ENCODE measurements at regions of chr3 and their contacts with region 1.

Region 1: GRCh38 chr3:63993653-63994079 is 29.6 kb downstream of the PSMD6 start:
- DNase-seq: peak; percentile 63 to 68
- H3K4me3 ChIP-seq: no peak overlapping the region
- H3K4me3 Mint-ChIP-seq: no peak overlapping the region
- H3K27ac Mint-ChIP-seq: no peak overlapping the region
- H3K4me1 ChIP-seq: no peaks in the 10 kb centered on the region
- H3K4me1 Mint-ChIP-seq: no peaks in the 10 kb centered on the region
- H3K27me3 ChIP-seq: no peaks in the 10 kb centered on the region
- H3K27me3 Mint-ChIP-seq: no peaks in the 10 kb centered on the region
- CTCF ChIP-seq: peak; percentile 76 to 93

Region 2: GRCh38 chr3:63945558-63946096 is 48.0 kb before region 1 on chr3:
- CTCF ChIA-PET with region 1: no interaction called
- POLR2A ChIA-PET with region 1: no interaction called
- intact Hi-C with region 1: loop called (anchors 5 kb)
- DNase-seq: no peak
- H3K4me3 ChIP-seq: no peak overlapping the region
- H3K4me3 Mint-ChIP-seq: no peak overlapping the region
- H3K27ac Mint-ChIP-seq: no peak overlapping the region
- H3K4me1 ChIP-seq: peaks cover 10% of the 10 kb centered on the region; the same call in 1 of the 2 replicates
- H3K4me1 Mint-ChIP-seq: peaks cover 28% of the 10 kb centered on the region
- H3K27me3 ChIP-seq: no peaks in the 10 kb centered on the region
- H3K27me3 Mint-ChIP-seq: no peaks in the 10 kb centered on the region
- CTCF ChIP-seq: no peak

Region 3: GRCh38 chr3:63961891-63962290 is 31.8 kb before region 1 on chr3:
- CTCF ChIA-PET with region 1: interaction called, 5 read pairs
- POLR2A ChIA-PET with region 1: no interaction called
- intact Hi-C with region 1: loop called (anchors 1 kb)
- DNase-seq: peak in 1 of 2 experiments; percentile 52
- H3K4me3 ChIP-seq: no peak overlapping the region
- H3K4me3 Mint-ChIP-seq: no peak overlapping the region
- H3K27ac Mint-ChIP-seq: no peak overlapping the region
- H3K4me1 ChIP-seq: peaks cover 15% of the 10 kb centered on the region
- H3K4me1 Mint-ChIP-seq: peaks cover 10% of the 10 kb centered on the region
- H3K27me3 ChIP-seq: no peaks in the 10 kb centered on the region
- H3K27me3 Mint-ChIP-seq: no peaks in the 10 kb centered on the region
- CTCF ChIP-seq: peak; percentile 41 to 64